SK-N-SH (cell line): ENCODE measurements at regions of chr7 and their contacts with region 1.

Region 1: GRCh38 chr7:133742709-133743538 is 384.2 kb upstream of the LRGUK start:
- DNase-seq: peak; percentile 36
- H3K4me3 ChIP-seq: no peak overlapping the region
- H3K27ac ChIP-seq: peak overlapping the region; percentile 10 to 100; a peak in 3 of 4 replicates
- H3K4me1 ChIP-seq: peaks cover 14 to 80% of the 10 kb centered on the region in 2 experiments; a peak in 3 of 4 replicates
- H3K27me3 ChIP-seq: no peaks in the 10 kb centered on the region
- CTCF ChIP-seq: peak; percentile 95
- EP300 ChIP-seq: peak; percentile 49 to 89; a peak in 3 of 4 replicates
- RAD21 ChIP-seq: peak; percentile 95

Region 2: GRCh38 chr7:133434055-133434865 is 308.7 kb before region 1 on chr7:
- CTCF ChIA-PET with region 1: interaction called, 25 read pairs
- POLR2A ChIA-PET with region 1: interaction called, 4 read pairs
- DNase-seq: peak; percentile 61
- H3K4me3 ChIP-seq: no peak overlapping the region
- H3K27ac ChIP-seq: peak overlapping the region in 1 of 2 experiments; percentile 92; a peak in 2 of 4 replicates
- H3K4me1 ChIP-seq: peaks cover 22 to 30% of the 10 kb centered on the region in 2 experiments; a peak in 3 of 4 replicates
- H3K27me3 ChIP-seq: no peaks in the 10 kb centered on the region
- CTCF ChIP-seq: peak; percentile 83
- EP300 ChIP-seq: no peak
- RAD21 ChIP-seq: peak; percentile 93

Region 3: GRCh38 chr7:133676805-133677370 is 66.0 kb before region 1 on chr7:
- CTCF ChIA-PET with region 1: interaction called, 15 read pairs
- POLR2A ChIA-PET with region 1: no interaction called
- DNase-seq: no peak
- H3K4me3 ChIP-seq: no peak overlapping the region
- H3K27ac ChIP-seq: peak overlapping the region; percentile 11 to 94; a peak in 3 of 4 replicates
- H3K4me1 ChIP-seq: peaks cover 5 to 49% of the 10 kb centered on the region in 2 experiments; a peak in 2 of 4 replicates
- H3K27me3 ChIP-seq: no peaks in the 10 kb centered on the region
- CTCF ChIP-seq: no peak
- EP300 ChIP-seq: peak in 1 of 2 experiments; percentile 33; a peak in 1 of 4 replicates
- RAD21 ChIP-seq: no peak

Region 4: GRCh38 chr7:133723044-133723443 is 19.9 kb before region 1 on chr7:
- CTCF ChIA-PET with region 1: interaction called, 30 read pairs
- POLR2A ChIA-PET with region 1: no interaction called
- DNase-seq: peak; percentile 49
- H3K4me3 ChIP-seq: no peak overlapping the region
- H3K27ac ChIP-seq: peak overlapping the region in 1 of 2 experiments; percentile 75; a peak in 2 of 4 replicates
- H3K4me1 ChIP-seq: peaks cover 0 to 25% of the 10 kb centered on the region in 2 experiments; a peak in 2 of 4 replicates
- H3K27me3 ChIP-seq: no peaks in the 10 kb centered on the region
- CTCF ChIP-seq: no peak
- EP300 ChIP-seq: no peak
- RAD21 ChIP-seq: peak; percentile 63

Region 5: DNA sequence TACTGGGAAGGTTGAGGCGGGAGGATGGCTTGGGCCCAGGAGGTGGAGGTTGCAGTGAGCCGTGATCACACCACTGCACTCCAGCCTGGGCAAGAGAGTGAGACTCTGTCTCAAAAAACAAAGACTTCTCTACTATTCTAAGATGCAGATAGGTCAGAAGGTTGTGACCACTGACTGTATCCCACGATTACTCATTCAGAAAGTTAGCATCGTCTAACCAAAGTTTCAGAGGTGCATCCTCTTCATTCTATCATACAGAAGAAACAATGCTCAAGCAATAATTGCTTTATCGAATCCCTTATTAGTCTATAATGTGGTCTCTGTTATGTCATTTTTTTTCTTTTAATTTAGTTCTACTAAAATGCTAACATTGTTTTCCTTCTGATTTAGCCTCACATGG is 35.5 kb after region 1 on chr7:
- CTCF ChIA-PET with region 1: interaction called, 48 read pairs
- POLR2A ChIA-PET with region 1: interaction called, 16 read pairs
- DNase-seq: no peak
- H3K4me3 ChIP-seq: no peak overlapping the region
- H3K27ac ChIP-seq: peak overlapping the region in 1 of 2 experiments; percentile 100; a peak in 2 of 4 replicates
- H3K4me1 ChIP-seq: peaks cover 0 to 58% of the 10 kb centered on the region in 2 experiments; a peak in 2 of 4 replicates
- H3K27me3 ChIP-seq: no peaks in the 10 kb centered on the region
- CTCF ChIP-seq: no peak
- EP300 ChIP-seq: no peak
- RAD21 ChIP-seq: no peak

Region 6: DNA sequence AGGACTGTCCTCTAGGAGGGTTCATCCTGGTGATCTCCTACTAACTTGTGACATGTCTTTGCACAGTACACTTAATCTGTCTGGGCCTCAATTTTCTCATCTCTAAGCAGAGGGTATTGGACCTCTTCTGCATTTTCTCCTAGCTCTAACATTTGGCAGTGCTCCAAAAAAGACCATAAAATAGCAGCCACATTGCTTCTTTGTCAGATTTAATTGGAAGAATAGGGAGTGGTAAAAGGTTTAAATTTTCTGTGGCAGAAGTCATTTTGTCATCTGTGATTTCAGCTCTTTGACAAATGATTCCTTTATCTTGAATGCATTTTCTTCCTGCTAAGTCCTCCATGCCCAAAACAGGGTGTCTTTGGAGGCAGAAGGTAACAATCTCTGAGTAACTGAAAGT is 94.3 kb after region 1 on chr7:
- CTCF ChIA-PET with region 1: interaction called, 17 read pairs
- POLR2A ChIA-PET with region 1: interaction called, 18 read pairs
- DNase-seq: peak; percentile 57
- H3K4me3 ChIP-seq: no peak overlapping the region
- H3K27ac ChIP-seq: peak overlapping the region; percentile 12 to 100; a peak in 3 of 4 replicates
- H3K4me1 ChIP-seq: peaks cover 0 to 50% of the 10 kb centered on the region in 2 experiments; a peak in 2 of 4 replicates
- H3K27me3 ChIP-seq: no peaks in the 10 kb centered on the region
- CTCF ChIP-seq: no peak
- EP300 ChIP-seq: peak in 1 of 2 experiments; percentile 94; a peak in 2 of 4 replicates
- RAD21 ChIP-seq: peak; percentile 33; the same call in 1 of the 2 replicates

Region 7: DNA sequence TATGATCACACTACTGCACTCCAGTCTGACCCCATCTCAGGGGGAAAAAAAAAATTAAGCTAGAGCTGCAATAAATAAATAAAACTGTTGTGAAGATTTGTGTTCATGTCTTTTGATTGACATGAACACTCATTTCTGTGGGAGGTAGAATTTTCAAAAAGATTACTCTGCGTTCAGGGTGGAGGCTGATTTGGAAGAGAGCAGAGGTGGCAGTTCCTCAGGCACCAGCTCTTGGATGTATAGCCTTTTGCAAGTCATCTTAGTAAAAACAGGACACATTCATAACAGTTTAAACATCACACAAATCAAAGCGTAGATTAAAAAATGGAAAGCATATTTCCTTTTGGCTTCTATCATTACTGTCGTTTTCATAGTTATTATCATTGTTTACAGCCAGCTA is 140.7 kb after region 1 on chr7:
- CTCF ChIA-PET with region 1: no interaction called
- POLR2A ChIA-PET with region 1: no interaction called
- DNase-seq: no peak
- H3K4me3 ChIP-seq: no peak overlapping the region
- H3K27ac ChIP-seq: peak overlapping the region in 1 of 2 experiments; percentile 51; a peak in 2 of 4 replicates
- H3K4me1 ChIP-seq: peaks cover 7 to 20% of the 10 kb centered on the region in 2 experiments; a peak in 3 of 4 replicates
- H3K27me3 ChIP-seq: no peaks in the 10 kb centered on the region
- CTCF ChIP-seq: no peak
- EP300 ChIP-seq: peak in 1 of 2 experiments; percentile 44; a peak in 1 of 4 replicates
- RAD21 ChIP-seq: no peak; the same call in 1 of the 2 replicates

Region 8: GRCh38 chr7:134016223-134016941 is 273.5 kb after region 1 on chr7:
- CTCF ChIA-PET with region 1: interaction called, 54 read pairs
- POLR2A ChIA-PET with region 1: interaction called, 8 read pairs
- DNase-seq: peak; percentile 67
- H3K4me3 ChIP-seq: peak overlapping the region in 1 of 2 experiments; percentile 17; a peak in 1 of 4 replicates
- H3K27ac ChIP-seq: peak overlapping the region in 1 of 2 experiments; percentile 95; a peak in 2 of 4 replicates
- H3K4me1 ChIP-seq: peaks cover 0 to 25% of the 10 kb centered on the region in 2 experiments; a peak in 2 of 4 replicates
- H3K27me3 ChIP-seq: no peaks in the 10 kb centered on the region
- CTCF ChIP-seq: peak; percentile 95
- EP300 ChIP-seq: peak in 1 of 2 experiments; percentile 55; a peak in 1 of 4 replicates
- RAD21 ChIP-seq: peak; percentile 99